MCF 10A (cell line): ENCODE measurements at regions of chr22 and their contacts with region 1.

Region 1: GRCh38 chr22:20922141-20922751 is 5.0 kb downstream of the CRKL start:
- DNase-seq: no peak
- H3K4me3 Mint-ChIP-seq: peak overlapping the region; percentile 68
- H3K27ac Mint-ChIP-seq: no peak overlapping the region
- H3K4me1 Mint-ChIP-seq: peaks cover 42% of the 10 kb centered on the region
- H3K27me3 Mint-ChIP-seq: no peaks in the 10 kb centered on the region
- CTCF ChIP-seq: no peak

Region 2: DNA sequence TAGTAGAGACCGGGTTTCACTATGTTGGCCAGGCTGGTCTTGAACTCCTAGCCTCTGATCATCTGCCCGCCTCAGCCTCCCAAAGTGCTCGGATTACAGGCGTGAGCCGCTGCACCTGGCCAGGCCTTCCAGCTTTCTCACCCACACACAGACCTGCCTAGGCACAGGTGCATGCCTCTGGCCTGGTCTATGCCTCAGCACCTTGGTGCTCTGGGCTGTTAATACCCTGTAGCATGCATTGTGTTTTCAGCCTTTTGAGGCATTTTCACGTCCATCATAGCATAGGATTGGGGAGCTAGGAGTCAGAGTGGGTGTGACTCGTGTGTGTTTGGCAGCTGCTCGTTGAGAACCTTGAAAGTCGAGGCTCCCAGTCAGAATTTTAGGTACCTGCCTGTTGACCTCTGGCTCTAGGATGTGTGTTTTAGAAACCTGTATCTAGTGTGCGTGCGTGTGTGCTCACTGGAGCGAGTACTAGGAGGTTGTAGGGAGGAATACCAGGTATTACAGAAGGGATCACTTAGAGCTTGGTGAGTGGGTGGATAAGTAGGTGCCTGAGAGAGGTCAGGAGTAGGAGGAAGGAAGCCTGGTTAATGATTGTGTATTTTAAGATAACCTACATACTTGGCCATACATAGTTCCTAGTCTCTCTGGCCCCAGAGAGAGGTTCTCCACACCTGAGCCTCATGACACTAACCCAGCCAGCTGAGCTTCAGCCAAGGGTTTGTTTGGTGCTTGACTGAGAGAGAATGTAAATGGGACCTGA is 15.0 kb after region 1 on chr22:
- CTCF ChIA-PET with region 1: interaction called, 3 read pairs
- POLR2A ChIA-PET with region 1: interaction called, 11 read pairs
- intact Hi-C with region 1: no loop called
- DNase-seq: no peak
- H3K4me3 Mint-ChIP-seq: no peak overlapping the region
- H3K27ac Mint-ChIP-seq: peak overlapping the region; percentile 8
- H3K4me1 Mint-ChIP-seq: peaks cover 38% of the 10 kb centered on the region
- H3K27me3 Mint-ChIP-seq: no peaks in the 10 kb centered on the region
- CTCF ChIP-seq: no peak

Region 3: GRCh38 chr22:20968281-20968977 is 46.2 kb after region 1 on chr22:
- CTCF ChIA-PET with region 1: no interaction called
- POLR2A ChIA-PET with region 1: no interaction called
- intact Hi-C with region 1: no loop called
- DNase-seq: no peak
- H3K4me3 Mint-ChIP-seq: no peak overlapping the region
- H3K27ac Mint-ChIP-seq: no peak overlapping the region
- H3K4me1 Mint-ChIP-seq: no peaks in the 10 kb centered on the region
- H3K27me3 Mint-ChIP-seq: no peaks in the 10 kb centered on the region
- CTCF ChIP-seq: no peak